ENCODE measurements at regions of chr22 and their contacts with region 1.

Region 1: GRCh38 chr22:50341977-50342650 is 1.0 kb upstream of the PPP6R2 start:
- DNase-seq: peak; percentile 83
- CTCF ChIP-seq: peak; percentile 95

Region 2: GRCh38 chr22:50306753-50307749 is 35.1 kb before region 1 on chr22 and contains the start of gene PLXNB2:
- CTCF ChIA-PET with region 1: interaction called, 14 read pairs
- POLR2A ChIA-PET with region 1: no interaction called
- DNase-seq: peak; percentile 89
- CTCF ChIP-seq: no peak

Measured in GM10248 (cell line).